ENCODE measurements at regions of chr3 and their contacts with region 1.

Region 1: DNA sequence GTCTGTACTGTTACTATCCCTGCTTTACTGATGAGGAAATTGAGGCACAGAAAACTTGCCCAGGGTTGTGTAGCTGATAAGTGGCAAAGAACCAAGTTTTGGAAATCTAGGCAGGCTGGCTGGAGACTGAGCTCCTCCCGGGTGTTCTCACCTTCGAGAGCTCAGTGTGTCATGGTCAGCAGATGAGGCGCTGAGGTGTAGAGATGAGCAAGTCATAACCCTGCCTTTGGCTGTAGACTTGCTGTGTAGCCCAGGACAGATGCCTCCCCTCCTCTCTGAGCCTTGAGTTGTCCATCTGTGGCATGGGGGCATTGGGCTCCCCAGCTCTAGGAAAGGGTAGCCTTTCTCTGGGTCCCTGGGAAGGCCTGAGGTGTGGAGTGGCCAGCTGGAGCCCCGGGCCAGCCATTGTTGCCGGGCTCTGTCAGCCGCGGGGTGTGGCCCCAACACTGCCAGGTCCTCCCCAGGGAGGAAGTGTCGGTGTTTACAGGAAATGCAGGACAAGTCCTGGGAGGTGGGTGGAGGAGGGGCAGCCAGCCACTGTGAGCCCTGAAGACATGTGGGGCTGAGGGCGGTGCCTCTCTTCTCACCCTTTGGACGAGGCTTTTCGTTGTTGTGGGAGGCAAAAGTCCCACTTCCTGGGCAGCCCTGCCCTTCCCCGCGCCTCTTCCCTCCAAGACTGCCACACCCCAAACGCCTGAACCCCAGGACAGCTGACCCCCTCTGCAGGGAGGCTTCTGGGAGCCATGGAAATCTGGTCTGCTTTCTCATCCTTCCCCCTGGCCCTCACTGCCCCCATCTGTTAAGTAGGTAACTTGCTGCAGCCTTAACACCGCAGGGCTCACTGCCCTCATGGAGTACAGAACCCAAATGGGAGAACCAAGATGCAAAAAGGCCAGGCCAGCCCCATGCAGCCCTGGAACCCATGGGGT is 29.1 kb downstream of the FGD5 start:
- DNase-seq: no peak
- ATAC-seq: peak; percentile 33

Region 2: GRCh38 chr3:14803981-14804834 is 43.7 kb before region 1 on chr3:
- intact Hi-C with region 1: loop called (anchors 1 kb)
- DNase-seq: peak; percentile 66
- ATAC-seq: peak; percentile 55

Region 3: DNA sequence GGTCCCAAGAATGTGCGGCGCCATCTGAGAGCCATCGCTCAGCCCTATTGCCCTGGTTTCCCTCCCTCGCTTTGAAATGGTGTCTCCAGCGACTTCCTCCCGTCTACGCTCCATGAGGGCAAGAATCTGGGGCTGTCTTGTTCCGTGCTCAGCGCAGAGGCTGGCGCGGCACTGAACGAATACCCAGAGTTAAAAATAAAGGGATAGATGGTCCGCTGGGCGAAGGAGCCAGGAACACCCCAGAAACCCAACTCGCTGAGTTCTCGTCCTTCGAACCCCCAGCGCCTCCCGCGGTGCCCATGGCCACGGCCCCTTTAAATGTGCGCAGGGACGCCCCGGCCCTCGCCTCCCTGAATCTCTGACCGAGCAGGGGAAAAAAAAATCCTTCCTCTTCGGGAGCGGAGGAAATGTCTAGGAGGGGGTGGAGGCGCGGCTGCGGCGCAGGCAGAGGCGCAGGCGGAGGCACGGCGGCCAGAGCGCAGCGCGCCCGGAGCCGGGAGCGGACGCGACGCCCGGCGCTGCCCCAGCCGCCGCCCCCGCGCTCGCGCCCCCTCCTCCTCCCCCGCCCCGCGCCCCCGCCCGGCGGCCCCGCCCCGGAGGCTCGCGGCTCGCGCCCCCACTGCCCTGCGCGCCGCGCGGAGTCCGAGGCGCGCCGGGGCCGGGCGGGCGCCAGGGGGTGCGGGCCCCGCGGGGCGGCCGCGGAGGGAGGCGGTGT is 37.6 kb before region 1 on chr3:
- intact Hi-C with region 1: loop called (anchors 2 kb)
- DNase-seq: no peak
- ATAC-seq: peak; percentile 45

Region 4: DNA sequence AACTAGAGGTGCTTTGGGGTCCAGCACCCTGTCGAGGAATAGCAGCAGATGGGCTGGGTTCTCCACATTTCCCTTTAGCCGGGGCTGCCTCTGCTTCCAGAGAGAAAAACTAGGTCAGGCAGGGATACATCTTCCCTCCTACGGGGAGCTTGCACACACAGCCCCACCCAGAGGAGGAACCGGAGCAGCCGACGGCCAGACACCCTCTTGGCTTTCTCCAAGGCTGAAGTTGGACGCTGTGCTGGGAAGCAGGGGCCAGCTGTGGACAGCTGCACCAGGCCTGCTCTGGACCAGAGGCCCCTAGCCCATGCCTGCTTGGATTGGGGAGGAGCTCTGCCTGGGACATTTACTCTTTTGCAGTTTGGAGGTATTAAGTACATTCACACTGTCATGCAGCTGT is 54.8 kb after region 1 on chr3:
- intact Hi-C with region 1: no loop called
- DNase-seq: peak; percentile 89
- ATAC-seq: peak; percentile 96